HEK293T (cell line): ENCODE measurements at regions of chrX and their contacts with region 1.

Region 1: GRCh38 chrX:107716816-107717700 is 58.5 kb downstream of the TSC22D3 start:
- DNase-seq: peak; percentile 67

Region 2: DNA sequence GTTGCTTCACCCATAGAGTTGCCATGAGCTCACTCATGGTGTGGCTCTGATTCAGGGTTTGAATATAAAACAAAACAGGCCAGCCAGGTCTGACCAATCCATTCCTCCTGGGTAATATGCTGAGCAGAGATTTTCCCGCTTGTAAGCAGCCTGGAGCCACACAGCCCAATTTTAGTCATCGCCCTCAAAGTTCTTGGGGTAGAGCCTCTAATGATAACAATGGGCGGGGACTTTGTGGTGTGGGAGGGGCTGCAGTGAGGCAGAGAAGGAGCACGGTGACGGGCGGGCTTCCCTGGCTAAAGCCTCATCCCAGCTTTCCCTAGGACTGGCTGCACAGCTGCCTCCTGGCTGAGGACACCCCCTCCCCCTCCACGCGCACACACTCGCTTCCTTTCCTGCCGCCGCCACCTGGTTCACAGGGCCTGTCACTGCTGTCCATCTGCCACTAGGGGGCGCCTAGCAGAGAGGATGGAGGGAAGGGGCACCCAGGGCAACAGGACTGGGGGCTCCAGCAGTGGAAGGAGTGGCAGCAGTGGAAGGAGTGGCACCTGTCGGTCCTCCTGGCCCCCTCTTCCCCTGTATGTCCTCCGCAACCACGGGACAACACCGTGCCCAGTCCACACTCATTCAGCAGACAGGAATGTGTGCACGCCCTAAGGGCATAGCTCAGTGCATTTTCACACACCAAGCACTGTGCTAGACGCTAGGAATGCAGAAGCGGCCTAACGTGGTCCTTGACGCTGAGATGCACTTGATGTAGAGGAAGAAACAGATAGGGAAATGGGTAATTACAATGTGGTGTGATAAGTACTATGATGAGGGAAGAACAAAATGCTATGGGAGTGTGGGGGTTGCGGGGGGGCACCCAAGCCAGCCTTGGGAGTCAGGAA is 61.9 kb before region 1 on chrX:
- CTCF ChIA-PET with region 1: interaction called, 14 read pairs
- POLR2A ChIA-PET with region 1: interaction called, 9 read pairs
- DNase-seq: peak; percentile 80

Region 3: GRCh38 chrX:107704181-107704580 is 12.9 kb before region 1 on chrX:
- CTCF ChIA-PET with region 1: interaction called, 4 read pairs
- POLR2A ChIA-PET with region 1: interaction called, 25 read pairs
- DNase-seq: no peak

Region 4: DNA sequence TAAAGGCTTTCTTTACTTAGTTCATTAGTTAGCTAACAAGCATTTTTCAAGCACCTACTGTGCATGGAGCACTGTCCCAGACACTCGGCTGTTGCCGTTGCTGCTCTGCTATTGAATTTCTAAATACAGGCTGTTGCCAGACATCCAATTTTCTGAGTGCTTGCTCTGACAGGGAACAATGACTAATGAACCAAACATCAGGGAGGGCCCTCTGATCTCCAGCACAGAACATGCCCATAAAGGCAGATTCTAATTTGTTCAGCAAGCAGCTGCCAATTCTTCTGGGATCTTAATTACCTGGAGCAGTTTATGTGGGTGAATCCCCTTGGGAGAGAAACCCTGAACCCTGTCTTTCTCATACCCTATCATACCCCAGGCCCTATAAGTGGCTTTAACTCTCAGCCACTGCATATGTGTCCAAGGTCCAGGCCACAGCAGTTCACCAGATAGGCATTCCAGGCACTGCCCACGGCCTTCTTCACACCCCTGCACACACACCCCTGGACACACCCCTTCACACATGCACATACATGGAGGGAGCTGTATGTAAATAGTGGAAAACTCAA is 30.6 kb after region 1 on chrX:
- CTCF ChIA-PET with region 1: interaction called, 3 read pairs
- POLR2A ChIA-PET with region 1: interaction called, 536 read pairs
- DNase-seq: peak; percentile 53

Region 5: DNA sequence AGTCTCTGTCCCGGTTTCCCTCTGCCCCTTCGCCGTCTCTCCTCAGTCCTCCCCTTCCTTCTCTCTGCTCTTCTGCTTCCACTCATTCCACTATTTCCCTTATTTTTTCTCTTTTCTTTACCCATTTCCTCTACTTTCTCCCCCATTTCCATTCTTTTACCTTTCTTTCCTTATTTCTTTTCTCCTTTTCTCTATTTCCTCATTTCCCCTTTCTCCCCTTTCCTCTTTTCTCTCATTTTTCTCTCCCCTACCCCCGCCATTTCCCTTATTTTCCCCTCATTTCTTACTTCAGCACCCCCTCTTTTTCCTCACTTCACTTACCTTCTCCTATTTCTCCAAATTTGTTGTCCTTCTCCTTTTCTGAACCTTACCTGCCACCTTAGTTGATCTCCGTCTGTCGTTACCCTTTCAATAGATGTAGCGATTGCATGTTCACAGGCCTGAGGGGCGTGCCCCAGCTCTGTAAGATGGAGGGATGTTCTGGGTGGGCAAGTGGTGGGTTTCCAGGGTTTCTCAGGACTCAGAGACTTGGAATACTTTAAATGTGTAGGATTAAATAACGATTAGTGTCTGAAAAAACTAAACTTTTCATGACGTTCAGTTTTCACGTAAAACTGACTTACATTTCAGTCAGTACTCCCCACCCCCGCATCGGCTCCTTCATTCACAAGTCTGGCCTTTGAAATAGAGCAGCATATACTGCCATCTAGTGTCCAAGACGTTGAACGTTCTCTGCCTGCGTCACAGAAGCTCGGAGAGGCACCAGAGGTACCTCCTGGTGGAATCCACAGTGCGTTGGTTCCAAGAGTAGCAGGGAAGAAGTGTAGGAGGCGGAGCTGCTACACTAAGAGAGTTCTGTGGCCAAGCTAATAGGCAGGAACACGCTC is 59.8 kb after region 1 on chrX:
- CTCF ChIA-PET with region 1: interaction called, 32 read pairs
- POLR2A ChIA-PET with region 1: interaction called, 198 read pairs
- DNase-seq: peak; percentile 89